B cell (primary cell): ENCODE measurements at regions of chr1 and their contacts with region 1.

Region 1: GRCh38 chr1:19485362-19486187 is at the start of gene CAPZB:
- DNase-seq: peak; percentile 94
- ATAC-seq: peak; percentile 93
- H3K4me3 ChIP-seq: peak within 1 kb of the TSS; percentile 72 to 94 (median 89)
- H3K4me3 Mint-ChIP-seq: peak within 1 kb of the TSS; percentile 89
- H3K27ac ChIP-seq: peak within 1 kb of the TSS; percentile 81 to 90
- H3K27ac Mint-ChIP-seq: peak within 1 kb of the TSS; percentile 95
- H3K4me1 ChIP-seq: peaks cover 52 to 62% of the 10 kb centered on the region in 2 donors
- H3K4me1 Mint-ChIP-seq: peaks cover 64% of the 10 kb centered on the region
- H3K27me3 ChIP-seq: no peaks in the 10 kb centered on the region
- H3K27me3 Mint-ChIP-seq: no peaks in the 10 kb centered on the region
- CTCF ChIP-seq: no peak
- total RNA-seq, gene CAPZB: 193 and 201 TPM in 2 replicates

Region 2: GRCh38 chr1:19209990-19210771 is 275.4 kb before region 1 on chr1 and contains the start of gene UBR4:
- CTCF ChIA-PET with region 1: no interaction called
- POLR2A ChIA-PET with region 1: interaction called, 4 read pairs
- intact Hi-C with region 1: loop called (anchors 1 kb)
- DNase-seq: peak; percentile 98
- ATAC-seq: peak; percentile 87
- H3K4me3 ChIP-seq: peak within 1 kb of the TSS; percentile 79 to 93 (median 88)
- H3K4me3 Mint-ChIP-seq: peak within 1 kb of the TSS; percentile 93
- H3K27ac ChIP-seq: peak within 1 kb of the TSS; percentile 89 to 94
- H3K27ac Mint-ChIP-seq: peak within 1 kb of the TSS; percentile 94
- H3K4me1 ChIP-seq: peaks cover 32 to 37% of the 10 kb centered on the region in 2 donors
- H3K4me1 Mint-ChIP-seq: peaks cover 58% of the 10 kb centered on the region
- H3K27me3 ChIP-seq: no peaks in the 10 kb centered on the region
- H3K27me3 Mint-ChIP-seq: no peaks in the 10 kb centered on the region
- CTCF ChIP-seq: no peak
- total RNA-seq, gene UBR4: 190 and 205 TPM in 2 replicates

Region 3: DNA sequence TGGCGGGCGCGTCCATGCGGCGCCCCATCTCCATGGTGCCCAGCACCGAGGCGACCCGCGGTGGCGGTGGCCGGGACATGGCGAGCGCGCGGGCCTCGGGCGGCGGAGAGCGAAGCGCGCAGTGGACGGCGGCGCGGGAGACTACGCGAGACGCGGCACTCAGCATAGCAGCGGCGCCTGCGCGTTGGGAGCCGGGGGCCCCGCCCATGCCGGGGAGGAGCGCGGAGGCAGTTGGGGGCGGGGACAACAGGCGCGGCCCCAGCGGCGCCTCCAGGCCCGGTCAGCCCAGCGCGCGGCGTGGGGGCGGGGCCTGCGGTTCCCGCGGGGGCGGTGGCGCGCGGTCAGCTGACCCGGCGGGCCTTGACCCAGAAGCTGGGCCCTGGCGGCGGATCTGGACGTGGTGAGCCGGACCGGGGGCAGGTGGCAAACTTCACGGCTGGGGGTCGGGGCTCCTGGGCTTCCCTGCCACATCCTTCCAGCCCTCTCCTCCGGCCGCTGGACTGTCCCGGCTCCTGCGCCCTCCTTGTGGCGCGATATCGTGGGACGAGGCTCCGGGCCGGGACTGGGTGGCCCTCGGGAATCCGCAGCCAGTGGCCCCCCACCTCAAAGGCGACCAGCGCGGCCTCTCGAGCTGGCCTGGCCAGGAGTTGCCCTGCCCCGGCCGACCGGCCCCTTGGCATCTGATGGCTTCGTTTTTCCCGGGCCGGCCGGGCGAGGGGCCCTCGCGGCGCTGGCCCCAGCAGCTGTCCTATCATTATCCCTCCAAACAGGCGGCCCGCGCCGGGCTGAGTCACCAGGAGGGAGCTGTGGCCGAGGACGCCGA is 173.4 kb before region 1 on chr1 and contains the starts of genes AKR7A2 and SLC66A1:
- CTCF ChIA-PET with region 1: no interaction called
- POLR2A ChIA-PET with region 1: no interaction called
- intact Hi-C with region 1: no loop called
- DNase-seq: peak; percentile 93
- ATAC-seq: peak; percentile 89
- H3K4me3 ChIP-seq: peak within 1 kb of the TSS; percentile 26 to 91 (median 79)
- H3K4me3 Mint-ChIP-seq: peak within 1 kb of the TSS; percentile 88
- H3K27ac ChIP-seq: peak within 1 kb of the TSS; percentile 65 to 90
- H3K27ac Mint-ChIP-seq: peak within 1 kb of the TSS; percentile 75
- H3K4me1 ChIP-seq: peaks cover 55 to 58% of the 10 kb centered on the region in 2 donors
- H3K4me1 Mint-ChIP-seq: peaks cover 57% of the 10 kb centered on the region
- H3K27me3 ChIP-seq: no peaks in the 10 kb centered on the region
- H3K27me3 Mint-ChIP-seq: no peaks in the 10 kb centered on the region
- CTCF ChIP-seq: no peak
- total RNA-seq, gene AKR7A2: 32.1 and 36.9 TPM in 2 replicates
- total RNA-seq, gene SLC66A1: 24.4 and 26.4 TPM in 2 replicates

Region 4: DNA sequence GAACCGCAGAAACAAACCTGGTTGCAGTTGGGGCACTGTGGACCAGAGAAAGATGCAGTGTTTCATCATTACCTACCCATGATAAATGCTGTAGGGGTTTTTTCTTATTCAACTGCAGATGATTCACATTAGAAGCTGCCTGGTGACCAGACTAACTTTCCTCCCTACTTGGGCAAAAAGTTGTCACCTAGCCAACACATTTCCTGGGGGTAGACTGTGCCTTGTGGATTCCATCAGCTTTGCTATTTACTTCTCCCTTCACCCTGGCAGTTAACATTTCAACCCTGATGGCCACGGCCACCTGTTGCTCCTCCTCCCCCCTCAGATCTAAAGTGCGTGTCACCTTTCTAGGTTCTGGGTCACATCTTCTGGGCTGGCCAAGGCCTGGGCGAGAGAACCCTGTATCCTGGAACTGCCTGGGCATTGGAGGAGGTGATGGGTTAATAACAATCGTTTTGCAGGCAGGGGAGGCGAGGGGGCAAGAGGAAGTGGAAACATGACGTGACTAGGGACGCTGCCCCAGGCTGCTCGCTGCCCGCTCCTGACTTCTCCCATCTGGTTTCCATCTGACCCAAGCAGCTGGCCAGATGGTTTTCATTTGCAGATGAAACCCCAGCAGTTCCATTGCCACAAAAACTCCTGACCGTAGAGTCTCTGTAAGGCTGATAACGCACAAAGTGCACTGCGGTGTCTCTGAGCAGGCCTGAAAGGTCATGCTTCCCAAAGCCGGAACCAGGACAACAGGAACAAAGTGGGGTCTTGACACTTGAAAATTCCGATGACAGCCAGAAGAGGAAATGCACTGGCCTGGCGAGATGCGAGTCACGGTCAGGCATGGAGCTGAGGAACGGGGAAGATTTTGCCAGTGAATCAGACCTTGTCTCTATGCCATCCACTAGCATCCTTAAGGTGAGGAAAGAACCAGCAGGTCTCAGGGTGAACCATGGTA is 36.8 kb before region 1 on chr1:
- CTCF ChIA-PET with region 1: interaction called, 6 read pairs
- POLR2A ChIA-PET with region 1: interaction called, 4 read pairs
- intact Hi-C with region 1: loop called (anchors 5 kb)
- DNase-seq: no peak
- ATAC-seq: no peak
- H3K4me3 ChIP-seq: no peak overlapping the region
- H3K4me3 Mint-ChIP-seq: peak overlapping the region; percentile 27
- H3K27ac ChIP-seq: peak overlapping the region in 1 of 2 donors; percentile 64
- H3K27ac Mint-ChIP-seq: peak overlapping the region; percentile 79
- H3K4me1 ChIP-seq: peaks cover 47 to 78% of the 10 kb centered on the region in 2 donors
- H3K4me1 Mint-ChIP-seq: peaks cover 80% of the 10 kb centered on the region
- H3K27me3 ChIP-seq: no peaks in the 10 kb centered on the region
- H3K27me3 Mint-ChIP-seq: no peaks in the 10 kb centered on the region
- CTCF ChIP-seq: no peak

Region 5: GRCh38 chr1:19504796-19505692 is 19.5 kb after region 1 on chr1:
- CTCF ChIA-PET with region 1: interaction called, 10 read pairs
- POLR2A ChIA-PET with region 1: interaction called, 3 read pairs
- intact Hi-C with region 1: no loop called
- DNase-seq: no peak
- ATAC-seq: peak; percentile 19
- H3K4me3 ChIP-seq: peak overlapping the region in 1 of 5 experiments; percentile 1
- H3K4me3 Mint-ChIP-seq: peak overlapping the region; percentile 64
- H3K27ac ChIP-seq: peak overlapping the region; percentile 19 to 32
- H3K27ac Mint-ChIP-seq: peak overlapping the region; percentile 73
- H3K4me1 ChIP-seq: peaks cover 26 to 31% of the 10 kb centered on the region in 2 donors
- H3K4me1 Mint-ChIP-seq: peaks cover 45% of the 10 kb centered on the region
- H3K27me3 ChIP-seq: no peaks in the 10 kb centered on the region
- H3K27me3 Mint-ChIP-seq: no peaks in the 10 kb centered on the region
- CTCF ChIP-seq: no peak

Region 6: GRCh38 chr1:19529664-19530063 is 44.1 kb after region 1 on chr1:
- CTCF ChIA-PET with region 1: no interaction called
- POLR2A ChIA-PET with region 1: no interaction called
- intact Hi-C with region 1: no loop called
- DNase-seq: no peak
- ATAC-seq: no peak
- H3K4me3 ChIP-seq: no peak overlapping the region
- H3K4me3 Mint-ChIP-seq: no peak overlapping the region
- H3K27ac ChIP-seq: no peak overlapping the region
- H3K27ac Mint-ChIP-seq: no peak overlapping the region
- H3K4me1 ChIP-seq: no peaks in the 10 kb centered on the region
- H3K4me1 Mint-ChIP-seq: no peaks in the 10 kb centered on the region
- H3K27me3 ChIP-seq: no peaks in the 10 kb centered on the region
- H3K27me3 Mint-ChIP-seq: no peaks in the 10 kb centered on the region
- CTCF ChIP-seq: no peak

Region 7: GRCh38 chr1:19596714-19597495 is 111.3 kb after region 1 on chr1:
- CTCF ChIA-PET with region 1: interaction called, 5 read pairs
- POLR2A ChIA-PET with region 1: interaction called, 11 read pairs
- intact Hi-C with region 1: loop called (anchors 1 kb)
- DNase-seq: peak; percentile 99
- ATAC-seq: peak; percentile 92
- H3K4me3 ChIP-seq: peak overlapping the region; percentile 58 to 97 (median 80)
- H3K4me3 Mint-ChIP-seq: peak overlapping the region; percentile 98
- H3K27ac ChIP-seq: peak overlapping the region; percentile 93 to 100
- H3K27ac Mint-ChIP-seq: peak overlapping the region; percentile 99
- H3K4me1 ChIP-seq: peaks cover 22 to 30% of the 10 kb centered on the region in 2 donors
- H3K4me1 Mint-ChIP-seq: peaks cover 42% of the 10 kb centered on the region
- H3K27me3 ChIP-seq: no peaks in the 10 kb centered on the region
- H3K27me3 Mint-ChIP-seq: no peaks in the 10 kb centered on the region
- CTCF ChIP-seq: no peak

Region 8: DNA sequence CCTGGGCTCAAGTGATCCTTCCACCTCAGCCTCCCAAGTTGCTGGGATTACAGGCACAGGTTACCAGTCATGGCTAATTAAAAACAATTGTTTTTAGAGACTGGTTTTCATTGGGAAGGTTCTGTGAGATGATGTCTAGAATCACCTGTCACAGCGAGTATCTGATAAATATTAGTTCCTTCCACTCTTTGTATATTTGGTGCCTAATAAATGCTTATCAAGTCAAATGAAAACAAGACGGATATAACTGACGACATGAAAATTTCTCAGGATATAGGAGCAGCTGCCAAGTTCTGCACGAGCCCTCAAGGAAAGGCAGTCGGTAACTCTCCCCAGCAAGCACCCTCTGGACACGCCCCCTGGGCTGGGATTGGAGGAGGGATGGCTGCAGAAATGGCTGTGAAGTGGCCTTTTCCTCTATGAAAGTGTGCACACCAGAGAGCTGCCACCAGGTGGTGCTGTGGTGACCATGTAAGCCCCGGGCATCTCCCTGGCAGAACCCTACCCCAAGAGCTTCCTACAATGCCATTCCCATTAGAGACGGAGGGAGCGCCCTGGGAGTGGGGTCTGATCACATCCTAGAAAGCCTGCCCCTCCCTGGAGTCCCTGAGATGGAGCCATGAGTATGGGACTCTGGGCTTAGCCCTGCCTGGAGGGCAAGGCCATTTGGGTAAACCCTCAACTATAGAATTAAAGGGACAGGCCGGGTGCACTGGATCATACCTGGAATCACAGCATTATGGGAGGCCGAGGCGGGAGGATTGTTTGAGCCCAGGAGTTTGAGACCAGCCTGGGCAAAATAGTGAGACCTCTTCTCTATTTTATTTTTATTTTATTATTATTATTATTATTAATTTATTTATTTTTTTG is 230.0 kb after region 1 on chr1:
- CTCF ChIA-PET with region 1: no interaction called
- POLR2A ChIA-PET with region 1: no interaction called
- intact Hi-C with region 1: no loop called
- DNase-seq: peak; percentile 80
- ATAC-seq: peak; percentile 96
- H3K4me3 ChIP-seq: no peak overlapping the region
- H3K4me3 Mint-ChIP-seq: no peak overlapping the region
- H3K27ac ChIP-seq: no peak overlapping the region
- H3K27ac Mint-ChIP-seq: no peak overlapping the region
- H3K4me1 ChIP-seq: peaks cover 0 to 2% of the 10 kb centered on the region in 2 donors
- H3K4me1 Mint-ChIP-seq: no peaks in the 10 kb centered on the region
- H3K27me3 ChIP-seq: no peaks in the 10 kb centered on the region
- H3K27me3 Mint-ChIP-seq: no peaks in the 10 kb centered on the region
- CTCF ChIP-seq: peak; percentile 80